ENCODE measurements at regions of chr15 and their contacts with region 1.

Region 1: GRCh38 chr15:56798639-56799038 is 65.3 kb upstream of the ZNF280D start:
- DNase-seq: peak in 1 of 2 donors; percentile 47
- ATAC-seq: no peak
- H3K4me3 ChIP-seq: no peak overlapping the region
- H3K27ac ChIP-seq: no peak overlapping the region
- H3K4me1 ChIP-seq: peaks cover 2 to 3% of the 10 kb centered on the region in 2 donors
- H3K27me3 ChIP-seq: no peaks in the 10 kb centered on the region

Region 2: GRCh38 chr15:56732921-56733797 is 65.5 kb before region 1 on chr15 and contains the start of gene ZNF280D:
- intact Hi-C with region 1: loop called in 1 of 2 experiments (anchors 10 kb)
- DNase-seq: peak; percentile 95 to 96
- ATAC-seq: peak; percentile 95
- H3K4me3 ChIP-seq: peak within 1 kb of the TSS; percentile 74 to 86
- H3K27ac ChIP-seq: peak within 1 kb of the TSS; percentile 96 to 100
- H3K4me1 ChIP-seq: peaks cover 3 to 4% of the 10 kb centered on the region in 2 donors
- H3K27me3 ChIP-seq: no peaks in the 10 kb centered on the region
- total RNA-seq, gene ZNF280D: 64.4 to 90.8 TPM

Measured in aorta (tissue), 5 donors.